Mammary epithelial cell (primary cell): ENCODE measurements at regions of chr9 and their contacts with region 1.

Region 1: DNA sequence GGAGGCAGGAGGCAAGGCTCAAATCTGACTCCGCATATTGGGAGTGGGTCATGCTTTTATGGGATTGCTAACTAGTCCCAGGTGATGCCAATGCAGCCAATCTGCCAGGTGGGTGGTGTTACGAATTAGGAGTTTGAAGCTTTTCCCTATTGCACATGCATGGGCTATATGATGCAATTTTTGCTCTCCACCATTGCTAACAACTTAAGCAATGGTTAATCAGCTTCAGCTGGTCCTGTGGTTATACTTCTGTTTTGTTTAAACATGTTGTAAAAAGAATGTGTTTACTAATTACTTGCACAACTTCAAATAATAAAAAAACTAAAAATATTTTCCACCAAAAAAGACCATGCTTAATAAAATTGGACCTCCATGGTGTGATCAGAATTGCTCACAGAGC is 55.7 kb downstream of the SHC3 start:
- DNase-seq: peak; percentile 9
- H3K4me3 ChIP-seq: no peak overlapping the region
- H3K27ac ChIP-seq: no peak overlapping the region
- H3K4me1 ChIP-seq: no peaks in the 10 kb centered on the region
- H3K27me3 ChIP-seq: no peaks in the 10 kb centered on the region
- CTCF ChIP-seq: no peak

Region 2: GRCh38 chr9:89223396-89223977 is 100.5 kb after region 1 on chr9:
- CTCF ChIA-PET with region 1: no interaction called
- dilution Hi-C with region 1: loop called (anchors 5 kb)
- in situ Hi-C with region 1: no loop called
- intact Hi-C with region 1: no loop called
- DNase-seq: no peak
- H3K4me3 ChIP-seq: no peak overlapping the region
- H3K27ac ChIP-seq: no peak overlapping the region
- H3K4me1 ChIP-seq: no peaks in the 10 kb centered on the region
- H3K27me3 ChIP-seq: peaks cover 5% of the 10 kb centered on the region
- CTCF ChIP-seq: no peak

Region 3: GRCh38 chr9:89448381-89448780 is 325.4 kb after region 1 on chr9:
- CTCF ChIA-PET with region 1: no interaction called
- dilution Hi-C with region 1: no loop called
- in situ Hi-C with region 1: no loop called
- intact Hi-C with region 1: no loop called
- DNase-seq: no peak
- H3K4me3 ChIP-seq: no peak overlapping the region
- H3K27ac ChIP-seq: no peak overlapping the region
- H3K4me1 ChIP-seq: no peaks in the 10 kb centered on the region
- H3K27me3 ChIP-seq: no peaks in the 10 kb centered on the region
- CTCF ChIP-seq: no peak

Region 4: GRCh38 chr9:89597711-89598625 is 475.0 kb after region 1 on chr9:
- CTCF ChIA-PET with region 1: no interaction called
- dilution Hi-C with region 1: no loop called
- in situ Hi-C with region 1: no loop called
- intact Hi-C with region 1: no loop called
- DNase-seq: peak; percentile 55
- H3K4me3 ChIP-seq: no peak overlapping the region
- H3K27ac ChIP-seq: no peak overlapping the region
- H3K4me1 ChIP-seq: no peaks in the 10 kb centered on the region
- H3K27me3 ChIP-seq: peaks cover 2% of the 10 kb centered on the region
- CTCF ChIP-seq: peak; percentile 74 to 82